ENCODE measurements at regions of chr4 and their contacts with region 1.

Region 1: DNA sequence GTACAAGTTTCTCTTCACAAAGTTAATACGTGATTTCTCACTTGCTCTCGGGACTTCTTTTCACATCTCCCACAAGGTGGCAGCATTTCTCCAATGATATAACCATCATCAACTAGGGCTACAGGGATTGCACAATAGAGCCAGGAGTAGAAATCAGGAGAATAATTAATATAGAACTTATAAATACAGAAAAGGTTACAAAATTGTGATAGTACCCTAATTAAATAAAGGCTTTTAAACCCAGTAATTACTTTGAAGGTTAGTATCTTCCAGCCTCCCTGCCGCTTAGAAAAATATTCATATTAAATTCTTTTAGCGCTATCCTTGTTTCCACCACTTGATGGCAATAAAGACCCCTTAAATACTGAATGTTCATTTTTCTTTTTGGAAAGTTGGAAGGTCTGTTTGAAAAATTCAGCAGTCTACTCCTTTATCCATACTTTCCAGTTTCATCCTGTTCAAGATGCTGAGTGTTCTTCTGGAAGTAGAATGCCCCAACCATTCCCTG is 65.8 kb downstream of the RASGEF1B start:
- DNase-seq: no peak

Region 2: GRCh38 chr4:80781436-80781835 is 624.5 kb before region 1 on chr4:
- intact Hi-C with region 1: no loop called
- DNase-seq: no peak

Region 3: GRCh38 chr4:81084029-81084428 is 321.9 kb before region 1 on chr4:
- intact Hi-C with region 1: no loop called
- DNase-seq: no peak

Region 4: DNA sequence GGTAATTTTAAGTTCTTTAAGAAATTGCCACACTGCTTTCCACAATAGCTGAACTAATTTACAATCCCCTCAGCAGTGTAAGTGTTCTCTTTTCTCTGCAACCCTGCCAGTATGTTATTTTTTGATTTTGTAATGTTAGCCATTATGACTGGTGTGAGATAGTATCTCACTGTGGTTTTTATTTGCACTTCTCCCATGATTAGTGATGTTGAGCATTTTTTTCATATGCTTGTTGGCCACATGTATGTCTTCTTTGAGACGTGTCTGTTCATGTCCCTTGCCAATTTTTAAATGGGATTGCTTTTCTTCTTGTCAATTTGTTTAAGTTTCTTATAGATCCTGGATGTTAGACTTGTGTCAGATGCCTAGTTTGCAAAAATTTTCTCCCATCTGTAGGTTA is 289.4 kb before region 1 on chr4:
- intact Hi-C with region 1: no loop called
- DNase-seq: no peak

Region 5: DNA sequence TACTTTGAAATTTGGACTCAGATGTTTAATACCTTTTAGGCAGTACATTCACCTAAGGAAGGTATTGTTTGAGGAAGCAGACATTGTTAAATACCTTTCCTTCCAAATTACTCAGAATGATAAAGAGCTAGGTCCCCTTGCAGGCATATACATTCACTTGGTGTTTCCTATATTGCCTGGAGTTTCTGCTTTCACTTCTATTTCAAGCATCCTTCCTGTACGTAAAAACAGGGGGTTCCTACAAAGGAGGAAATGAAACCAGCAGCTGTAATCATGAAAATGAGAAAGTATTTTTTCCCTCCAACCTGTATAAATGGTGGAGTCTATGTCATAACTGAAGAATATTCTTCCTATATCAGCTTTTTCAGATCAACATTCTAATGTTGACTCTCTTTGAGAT is 156.1 kb after region 1 on chr4:
- intact Hi-C with region 1: no loop called
- DNase-seq: no peak

Region 6: DNA sequence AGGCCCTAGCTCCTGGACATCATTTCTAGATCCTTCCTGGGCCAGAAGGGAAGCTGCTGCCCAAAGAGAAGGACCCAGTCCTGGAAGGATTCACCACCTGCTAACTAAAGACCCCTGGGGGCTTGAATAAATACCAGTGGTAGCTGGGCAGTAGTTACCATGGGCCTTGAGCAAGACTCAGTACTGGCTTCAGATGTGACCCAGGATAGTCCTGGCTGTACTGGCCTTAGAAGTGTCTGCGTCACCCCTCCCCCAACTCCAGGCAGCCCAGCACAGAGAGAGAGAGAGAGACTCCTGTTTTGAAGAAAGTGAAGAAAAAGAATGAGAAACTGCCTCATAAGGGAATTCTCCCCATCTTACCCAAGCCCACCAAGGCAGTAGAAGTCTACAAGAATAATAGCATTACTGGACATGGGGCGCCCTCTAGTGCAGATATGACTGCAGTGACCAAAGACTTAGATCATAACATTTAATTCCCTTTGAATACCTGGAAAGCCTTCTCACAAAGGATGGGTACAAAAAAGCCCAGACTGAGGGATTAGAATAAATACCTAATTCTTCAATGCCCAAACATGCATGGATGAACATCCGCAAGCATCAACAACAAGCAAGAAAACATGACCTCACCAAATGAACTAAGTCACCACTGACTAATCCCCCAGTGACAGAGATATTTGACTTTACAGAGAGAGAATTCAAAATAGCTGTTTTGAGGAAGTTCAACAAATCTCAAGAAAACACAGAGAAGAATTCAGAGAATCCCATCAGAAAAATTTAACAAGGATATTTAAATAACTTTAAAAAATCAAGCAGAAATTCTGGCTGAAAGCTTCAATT is 796.1 kb after region 1 on chr4:
- intact Hi-C with region 1: loop called (anchors 5 kb)
- DNase-seq: no peak

Region 7: DNA sequence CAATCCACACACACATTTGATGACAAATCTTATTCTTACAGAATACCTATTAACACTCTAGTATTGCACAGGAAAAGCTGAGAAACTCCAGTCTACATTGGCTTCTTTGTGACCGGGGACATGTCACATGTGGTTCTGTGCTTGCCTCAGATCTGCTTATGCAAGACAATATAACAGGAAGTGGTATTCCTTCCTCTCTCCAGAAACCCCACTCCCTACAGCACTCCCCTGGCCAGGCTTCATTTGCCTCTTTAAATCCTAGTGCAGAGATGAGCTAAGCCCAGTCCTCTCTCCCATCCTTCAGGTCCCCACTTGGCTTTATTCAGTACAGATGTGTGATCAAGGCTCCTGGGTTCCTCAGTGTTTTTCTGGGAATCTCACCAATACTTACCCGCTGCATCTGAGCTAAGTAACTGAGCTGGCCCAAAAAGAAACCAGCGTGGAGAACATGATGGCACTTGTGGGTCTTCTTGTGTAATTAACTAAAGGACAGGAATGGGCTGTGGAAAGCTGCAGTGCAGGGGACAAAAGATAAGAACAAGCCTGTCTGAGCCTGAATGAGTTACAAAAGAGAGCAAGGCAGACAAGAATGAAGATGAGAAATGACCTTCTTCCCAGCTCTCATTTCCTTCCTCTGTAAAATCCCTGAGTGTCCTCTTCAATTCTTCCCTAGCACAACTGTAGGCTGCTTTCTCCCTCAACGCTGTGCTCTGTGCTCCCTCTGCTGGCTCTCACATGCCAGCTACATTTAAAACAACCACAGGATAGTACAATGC is 862.3 kb after region 1 on chr4:
- intact Hi-C with region 1: loop called (anchors 5 kb)
- DNase-seq: peak; percentile 79